Tibial artery (tissue), 4 donors: ENCODE measurements at regions of chr7 and their contacts with region 1.

Region 1: GRCh38 chr7:47453093-47454049 is 128.5 kb downstream of the TNS3 start:
- DNase-seq: peak; percentile 90 to 94
- H3K4me3 ChIP-seq: peak overlapping the region; percentile 36 to 41
- H3K27ac ChIP-seq: peak overlapping the region; percentile 86 to 92
- H3K4me1 ChIP-seq: peaks cover 0 to 71% (median 47%) of the 10 kb centered on the region in 4 donors
- H3K27me3 ChIP-seq: no peaks in the 10 kb centered on the region
- CTCF ChIP-seq: no peak

Region 2: DNA sequence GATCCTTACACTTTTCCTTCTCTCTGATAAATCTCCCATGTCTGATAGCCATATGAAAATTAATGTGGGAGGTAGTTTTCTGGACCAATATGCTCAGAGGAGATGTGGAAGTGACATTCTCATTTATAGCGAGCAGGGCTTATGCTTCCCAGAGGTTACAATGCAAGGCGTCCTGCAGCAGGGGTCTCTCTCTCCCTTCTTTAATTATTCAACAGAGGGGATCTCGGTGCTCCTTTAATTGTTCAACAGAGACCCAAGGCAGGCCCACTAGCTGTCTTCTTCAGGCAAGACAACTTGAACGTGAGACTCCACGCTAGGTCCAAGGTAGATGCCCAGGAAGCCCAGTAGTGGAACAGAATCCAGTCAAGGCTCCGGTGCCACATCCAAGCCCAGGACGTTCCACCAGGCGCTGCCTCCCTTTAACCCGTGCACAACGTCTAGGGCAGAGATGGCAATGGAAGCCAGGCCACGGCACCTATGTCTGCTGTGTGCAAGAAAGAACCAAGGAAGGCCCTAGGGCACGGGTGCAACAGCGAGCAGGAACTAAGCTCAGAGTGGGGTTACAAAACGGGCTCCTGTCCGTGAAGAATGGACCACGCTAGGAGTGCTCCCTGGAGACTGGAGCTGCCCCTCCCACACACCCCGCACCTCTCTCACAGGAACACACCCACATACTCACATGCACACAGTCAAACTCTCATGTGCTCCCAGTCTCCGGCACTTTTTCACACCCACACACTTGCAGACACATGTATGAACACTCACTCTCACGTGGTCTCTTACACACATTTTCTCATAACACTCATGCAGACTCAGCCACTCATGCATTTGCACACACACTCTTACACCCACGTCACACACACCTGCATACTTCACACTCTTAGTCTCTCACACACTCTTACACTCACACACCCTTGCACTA is 101.9 kb before region 1 on chr7:
- intact Hi-C with region 1: no loop called
- DNase-seq: no peak
- H3K4me3 ChIP-seq: no peak overlapping the region
- H3K27ac ChIP-seq: no peak overlapping the region
- H3K4me1 ChIP-seq: no peaks in the 10 kb centered on the region
- H3K27me3 ChIP-seq: no peaks in the 10 kb centered on the region
- CTCF ChIP-seq: no peak

Region 3: GRCh38 chr7:47571331-47572093 is 118.1 kb after region 1 on chr7:
- intact Hi-C with region 1: loop called (anchors 10 kb)
- DNase-seq: peak; percentile 76 to 85
- H3K4me3 ChIP-seq: peak overlapping the region; percentile 17 to 27
- H3K27ac ChIP-seq: peak overlapping the region; percentile 80 to 82
- H3K4me1 ChIP-seq: peaks cover 0 to 85% (median 56%) of the 10 kb centered on the region in 4 donors
- H3K27me3 ChIP-seq: no peaks in the 10 kb centered on the region
- CTCF ChIP-seq: peak in 1 of 2 experiments; percentile 15